WTC11 (cell line): ENCODE measurements at regions of chr19 and their contacts with region 1.

Region 1: DNA sequence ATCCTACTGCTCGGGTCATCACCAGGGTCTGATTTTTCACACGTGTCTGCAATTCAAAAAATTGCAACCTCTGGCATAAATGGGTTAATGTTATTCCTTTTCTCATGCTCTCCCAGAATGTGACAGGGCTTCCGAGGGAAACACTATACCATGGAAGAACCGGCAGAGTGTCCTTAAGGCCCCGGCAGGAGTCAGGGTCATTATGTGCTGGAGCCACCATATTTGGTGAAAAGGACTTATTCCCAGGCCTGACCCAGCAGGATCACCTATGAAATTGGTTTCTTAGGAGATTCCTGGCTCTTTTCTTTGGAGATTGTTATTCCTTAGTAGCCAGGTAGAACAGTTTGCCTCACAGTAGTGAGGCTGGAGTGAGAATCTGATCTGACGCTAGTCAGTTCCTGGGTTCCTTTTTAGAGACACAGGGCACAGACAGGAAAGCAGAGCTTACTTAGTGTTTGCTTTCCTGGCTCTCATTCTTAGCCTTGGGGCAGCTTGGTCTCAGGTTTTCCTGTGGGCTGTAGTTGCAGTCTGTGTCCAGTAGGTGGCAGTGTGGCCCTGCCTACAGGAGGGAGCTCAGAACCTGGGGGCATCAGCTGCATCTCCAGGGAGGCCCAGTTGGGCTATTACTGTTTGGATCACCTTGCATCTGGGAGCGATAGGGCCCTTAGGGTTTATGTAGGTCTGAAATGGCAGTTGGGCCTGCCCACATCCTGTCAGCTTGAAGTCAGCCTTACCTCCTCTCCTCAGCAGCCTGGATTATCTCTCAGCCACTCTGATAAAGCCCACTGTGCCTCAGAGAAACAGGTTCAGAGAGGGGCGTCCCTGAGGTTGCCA is 12.4 kb downstream of the SNRNP70 start:
- DNase-seq: peak; percentile 82
- ATAC-seq: peak; percentile 89
- H3K4me3 Mint-ChIP-seq: no peak overlapping the region
- H3K27ac Mint-ChIP-seq: peak overlapping the region; percentile 85
- H3K4me1 Mint-ChIP-seq: peaks cover 13% of the 10 kb centered on the region
- H3K27me3 Mint-ChIP-seq: no peaks in the 10 kb centered on the region
- CTCF ChIP-seq: peak; percentile 98

Region 2: GRCh38 chr19:49064768-49065611 is 32.7 kb before region 1 on chr19 and contains the start of gene NTF4:
- CTCF ChIA-PET with region 1: interaction called, 19 read pairs
- POLR2A ChIA-PET with region 1: no interaction called
- DNase-seq: peak; percentile 78
- ATAC-seq: peak; percentile 73
- H3K4me3 Mint-ChIP-seq: peak within 1 kb of the TSS; percentile 66
- H3K27ac Mint-ChIP-seq: no peak within 1 kb of the TSS
- H3K4me1 Mint-ChIP-seq: peaks cover 33% of the 10 kb centered on the region
- H3K27me3 Mint-ChIP-seq: peaks cover 79% of the 10 kb centered on the region
- CTCF ChIP-seq: no peak
- total RNA-seq, gene NTF4: 3.9 to 7.7 TPM (median 5.0 TPM) in 3 replicates

Region 3: GRCh38 chr19:49118565-49119410 is 21.1 kb after region 1 on chr19 and contains the start of gene C19orf73:
- CTCF ChIA-PET with region 1: interaction called, 65 read pairs
- POLR2A ChIA-PET with region 1: interaction called, 5 read pairs
- DNase-seq: peak; percentile 94
- ATAC-seq: peak; percentile 81
- H3K4me3 Mint-ChIP-seq: peak within 1 kb of the TSS; percentile 75
- H3K27ac Mint-ChIP-seq: peak within 1 kb of the TSS; percentile 61
- H3K4me1 Mint-ChIP-seq: peaks cover 14% of the 10 kb centered on the region
- H3K27me3 Mint-ChIP-seq: peaks cover 64% of the 10 kb centered on the region
- CTCF ChIP-seq: no peak
- total RNA-seq, gene C19orf73: 3.1 to 3.4 TPM (median 3.2 TPM) in 3 replicates

Region 4: DNA sequence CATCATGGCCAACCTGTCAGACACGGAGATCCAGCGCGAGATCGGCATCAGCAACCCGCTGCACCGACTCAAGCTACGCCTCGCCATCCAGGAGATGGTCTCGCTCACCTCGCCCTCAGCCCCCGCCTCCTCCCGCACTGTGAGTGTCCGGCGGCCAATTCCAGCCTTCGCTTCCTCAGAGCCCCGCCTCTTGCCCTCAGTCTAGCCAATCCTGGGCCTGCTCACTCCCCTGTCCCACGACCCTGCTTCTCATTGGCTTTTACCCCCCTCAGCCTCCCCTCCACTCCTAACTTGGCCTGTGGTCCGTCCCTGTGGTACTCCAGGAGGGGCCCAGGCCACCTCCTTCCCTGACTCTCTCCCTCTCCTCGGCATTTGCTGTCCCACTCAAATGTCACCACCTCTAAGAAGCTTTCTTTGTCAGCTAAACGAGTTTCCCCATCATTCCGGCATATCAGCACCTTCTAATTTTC is 45.2 kb after region 1 on chr19:
- CTCF ChIA-PET with region 1: interaction called, 53 read pairs
- POLR2A ChIA-PET with region 1: interaction called, 5 read pairs
- DNase-seq: peak; percentile 96
- ATAC-seq: peak; percentile 92
- H3K4me3 Mint-ChIP-seq: peak overlapping the region; percentile 89
- H3K27ac Mint-ChIP-seq: peak overlapping the region; percentile 39; the same call in 1 of the 2 replicates
- H3K4me1 Mint-ChIP-seq: peaks cover 31% of the 10 kb centered on the region
- H3K27me3 Mint-ChIP-seq: peaks cover 37% of the 10 kb centered on the region
- CTCF ChIP-seq: no peak

Region 5: DNA sequence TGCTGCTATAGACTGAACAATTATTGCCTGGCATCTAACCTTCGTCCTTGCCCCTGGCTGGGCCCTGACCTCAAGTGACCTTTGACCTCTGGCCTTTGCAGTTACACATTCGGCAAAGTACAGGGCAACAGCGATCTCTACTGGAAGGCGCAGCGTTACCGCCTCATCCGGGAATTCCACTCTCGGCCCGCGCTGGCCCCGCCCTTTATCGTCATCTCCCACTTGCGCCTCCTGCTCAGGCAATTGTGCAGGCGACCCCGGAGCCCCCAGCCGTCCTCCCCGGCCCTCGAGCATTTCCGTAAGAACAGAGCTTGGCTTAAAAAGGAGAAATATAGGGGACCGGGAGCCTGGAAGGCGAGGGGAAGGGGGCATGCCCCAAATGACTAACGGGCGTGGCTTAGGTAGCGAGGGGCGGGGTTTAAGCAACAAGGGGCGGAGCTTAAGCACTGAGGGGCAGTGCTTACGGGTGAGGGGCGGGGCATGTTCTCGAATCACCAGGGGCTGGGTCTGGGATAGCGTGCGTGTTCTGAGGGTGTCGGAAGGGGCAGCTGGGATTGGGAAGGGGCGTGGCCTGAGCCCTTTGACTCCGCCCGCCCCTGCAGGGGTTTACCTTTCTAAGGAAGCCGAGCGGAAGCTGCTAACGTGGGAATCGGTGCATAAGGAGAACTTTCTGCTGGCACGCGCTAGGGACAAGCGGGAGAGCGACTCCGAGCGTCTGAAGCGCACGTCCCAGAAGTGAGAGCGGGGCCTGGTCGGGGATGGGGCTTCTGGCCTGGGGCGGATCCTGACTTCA is 112.6 kb after region 1 on chr19:
- CTCF ChIA-PET with region 1: interaction called, 39 read pairs
- POLR2A ChIA-PET with region 1: interaction called, 4 read pairs
- DNase-seq: peak; percentile 96
- ATAC-seq: peak; percentile 97
- H3K4me3 Mint-ChIP-seq: peak overlapping the region; percentile 75
- H3K27ac Mint-ChIP-seq: peak overlapping the region; percentile 92
- H3K4me1 Mint-ChIP-seq: peaks cover 7% of the 10 kb centered on the region
- H3K27me3 Mint-ChIP-seq: peaks cover 2% of the 10 kb centered on the region; the same call in 1 of the 2 replicates
- CTCF ChIP-seq: no peak